Activated B cell treated with CpG ODN at 0.5 μM for 24 hours (primary cell): ENCODE measurements at regions of chr9 and their contacts with region 1.

Region 1: DNA sequence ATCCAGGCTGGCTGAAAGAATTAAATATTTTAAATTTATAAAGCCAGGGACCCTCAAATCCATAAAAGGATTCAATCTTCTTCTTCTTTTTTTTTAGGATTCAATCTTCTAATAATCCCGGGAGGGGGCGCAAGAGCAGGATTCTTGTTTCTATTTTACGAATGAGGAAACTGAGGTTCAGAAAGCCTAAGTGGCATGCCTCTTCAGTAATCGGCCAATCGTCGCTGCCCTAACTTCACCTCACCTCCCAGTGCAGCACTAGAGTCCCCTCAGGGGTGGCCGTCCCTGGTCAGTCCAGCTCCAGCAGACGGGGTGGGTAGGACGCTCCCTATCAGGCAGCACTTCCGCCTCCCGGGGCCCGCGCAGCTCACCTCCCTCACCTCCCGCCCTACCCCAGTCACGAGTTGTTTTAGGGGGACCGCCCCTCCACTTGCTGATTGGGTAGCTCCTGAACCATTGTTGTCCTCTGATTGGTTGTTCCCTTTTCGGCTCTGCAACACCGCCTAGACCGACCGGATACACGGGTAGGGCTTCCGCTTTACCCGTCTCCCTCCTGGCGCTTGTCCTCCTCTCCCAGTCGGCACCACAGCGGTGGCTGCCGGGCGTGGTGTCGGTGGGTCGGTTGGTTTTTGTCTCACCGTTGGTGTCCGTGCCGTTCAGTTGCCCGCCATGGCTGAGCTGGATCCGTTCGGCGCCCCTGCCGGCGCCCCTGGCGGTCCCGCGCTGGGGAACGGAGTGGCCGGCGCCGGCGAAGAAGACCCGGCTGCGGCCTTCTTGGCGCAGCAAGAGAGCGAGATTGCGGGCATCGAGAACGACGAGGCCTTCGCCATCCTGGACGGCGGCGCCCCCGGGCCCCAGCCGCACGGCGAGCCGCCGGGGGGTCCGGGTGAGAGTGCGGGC is at the start of gene CLTA:
- DNase-seq: peak; percentile 84
- ATAC-seq: peak; percentile 98
- H3K4me3 Mint-ChIP-seq: peak within 1 kb of the TSS; percentile 95
- H3K27ac Mint-ChIP-seq: peak within 1 kb of the TSS; percentile 91
- H3K4me1 Mint-ChIP-seq: peaks cover 51% of the 10 kb centered on the region
- H3K27me3 Mint-ChIP-seq: no peaks in the 10 kb centered on the region
- CTCF ChIP-seq: no peak
- total RNA-seq, gene CLTA: 104 and 115 TPM in 2 replicates

Region 2: GRCh38 chr9:36092509-36093215 is 98.0 kb before region 1 on chr9:
- CTCF ChIA-PET with region 1: no interaction called
- POLR2A ChIA-PET with region 1: interaction called, 6 read pairs
- intact Hi-C with region 1: loop called (anchors 1 kb)
- DNase-seq: no peak
- ATAC-seq: peak; percentile 98
- H3K4me3 Mint-ChIP-seq: peak overlapping the region; percentile 58
- H3K27ac Mint-ChIP-seq: peak overlapping the region; percentile 85
- H3K4me1 Mint-ChIP-seq: peaks cover 16% of the 10 kb centered on the region
- H3K27me3 Mint-ChIP-seq: no peaks in the 10 kb centered on the region
- CTCF ChIP-seq: no peak

Region 3: DNA sequence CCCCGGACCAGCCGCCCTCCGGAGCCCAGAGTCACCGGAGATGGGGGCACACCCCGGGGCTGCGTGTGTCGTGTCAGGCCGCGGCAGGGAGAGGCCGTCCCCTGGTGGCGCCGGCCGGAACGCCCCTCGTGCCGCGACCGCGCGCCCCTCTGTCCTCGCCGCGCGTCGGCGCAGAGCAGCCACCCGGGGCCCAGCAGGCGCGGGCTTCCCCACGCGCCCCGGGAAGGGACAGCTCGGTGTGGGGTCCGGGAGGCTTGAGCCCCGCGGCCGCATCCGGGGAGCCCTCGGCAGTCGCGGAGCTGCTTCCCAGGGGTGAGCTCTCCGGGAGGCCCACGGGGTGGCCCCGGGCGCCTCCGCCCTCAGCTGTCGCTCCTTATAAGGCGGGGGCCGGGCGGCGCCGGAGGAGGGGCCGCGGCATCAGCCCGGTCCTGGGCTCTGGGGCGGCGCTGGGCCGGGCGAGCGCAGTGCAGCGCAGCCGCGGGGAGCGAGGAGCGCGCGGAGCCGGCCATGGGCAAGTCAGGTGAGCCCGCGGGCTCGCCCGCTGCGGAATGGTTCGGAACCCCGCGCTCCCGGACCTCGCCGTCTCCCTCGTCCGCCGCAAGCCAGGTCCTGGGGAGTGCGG is 54.3 kb before region 1 on chr9 and contains the start of gene GLIPR2:
- CTCF ChIA-PET with region 1: no interaction called
- POLR2A ChIA-PET with region 1: interaction called, 9 read pairs
- intact Hi-C with region 1: loop called (anchors 1 kb)
- DNase-seq: peak; percentile 79
- ATAC-seq: peak; percentile 98
- H3K4me3 Mint-ChIP-seq: peak within 1 kb of the TSS; percentile 87
- H3K27ac Mint-ChIP-seq: peak within 1 kb of the TSS; percentile 88
- H3K4me1 Mint-ChIP-seq: peaks cover 53% of the 10 kb centered on the region
- H3K27me3 Mint-ChIP-seq: no peaks in the 10 kb centered on the region
- CTCF ChIP-seq: no peak
- total RNA-seq, gene GLIPR2: 13.6 and 14.3 TPM in 2 replicates

Region 4: GRCh38 chr9:36142510-36143244 is 48.0 kb before region 1 on chr9:
- CTCF ChIA-PET with region 1: interaction called, 8 read pairs
- POLR2A ChIA-PET with region 1: interaction called, 17 read pairs
- intact Hi-C with region 1: no loop called
- DNase-seq: no peak
- ATAC-seq: peak; percentile 52
- H3K4me3 Mint-ChIP-seq: peak overlapping the region; percentile 94
- H3K27ac Mint-ChIP-seq: peak overlapping the region; percentile 100
- H3K4me1 Mint-ChIP-seq: peaks cover 95% of the 10 kb centered on the region
- H3K27me3 Mint-ChIP-seq: no peaks in the 10 kb centered on the region
- CTCF ChIP-seq: no peak

Region 5: GRCh38 chr9:36148311-36149051 is 42.2 kb before region 1 on chr9:
- CTCF ChIA-PET with region 1: interaction called, 8 read pairs
- POLR2A ChIA-PET with region 1: interaction called, 17 read pairs
- intact Hi-C with region 1: loop called (anchors 1 kb)
- DNase-seq: no peak
- ATAC-seq: no peak
- H3K4me3 Mint-ChIP-seq: no peak overlapping the region
- H3K27ac Mint-ChIP-seq: no peak overlapping the region
- H3K4me1 Mint-ChIP-seq: peaks cover 81% of the 10 kb centered on the region
- H3K27me3 Mint-ChIP-seq: no peaks in the 10 kb centered on the region
- CTCF ChIP-seq: no peak

Region 6: DNA sequence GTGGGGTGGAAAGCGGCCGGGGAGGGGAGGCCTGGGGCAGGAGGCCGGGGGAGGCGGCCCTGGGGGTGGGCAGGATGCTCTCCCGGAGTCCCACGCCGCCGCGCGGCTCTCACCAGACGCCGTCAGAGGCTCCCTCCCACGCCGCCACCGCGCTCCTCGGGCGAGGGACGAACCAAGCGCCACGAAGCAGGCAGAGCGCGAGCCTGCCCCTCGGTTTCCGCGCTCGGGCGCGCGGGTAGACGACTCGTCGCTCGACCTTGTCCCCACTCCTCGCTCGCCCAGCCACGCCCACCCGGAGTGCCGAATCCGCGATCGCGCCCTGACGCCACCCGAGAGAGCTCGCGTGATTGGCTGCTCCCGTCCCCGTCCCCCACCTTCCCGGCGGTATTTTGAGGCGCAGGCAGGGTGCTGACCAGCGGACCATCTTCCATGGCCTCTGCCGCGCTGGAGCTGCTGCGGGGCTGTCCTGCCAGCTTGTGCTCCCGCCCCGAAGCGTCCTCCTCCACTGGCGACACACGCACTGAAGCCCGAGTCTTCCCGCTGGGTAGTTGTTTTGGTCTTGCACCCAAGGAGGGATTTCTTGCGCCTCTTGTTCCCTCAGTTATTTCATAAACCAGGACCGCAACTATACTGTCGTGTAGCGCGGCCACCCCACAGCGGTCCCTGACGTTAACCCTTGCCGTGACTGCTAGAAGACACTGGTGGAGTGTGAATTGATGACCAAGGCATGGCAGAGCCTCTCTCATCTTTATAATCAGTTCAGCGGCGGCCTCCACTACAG is 67.8 kb after region 1 on chr9 and contains the start of gene GNE:
- CTCF ChIA-PET with region 1: interaction called, 3 read pairs
- POLR2A ChIA-PET with region 1: interaction called, 18 read pairs
- intact Hi-C with region 1: loop called (anchors 1 kb)
- DNase-seq: peak; percentile 97
- ATAC-seq: peak; percentile 80
- H3K4me3 Mint-ChIP-seq: peak within 1 kb of the TSS; percentile 95
- H3K27ac Mint-ChIP-seq: peak within 1 kb of the TSS; percentile 92
- H3K4me1 Mint-ChIP-seq: peaks cover 16% of the 10 kb centered on the region
- H3K27me3 Mint-ChIP-seq: no peaks in the 10 kb centered on the region
- CTCF ChIP-seq: no peak
- total RNA-seq, gene GNE: 18.1 and 19.3 TPM in 2 replicates

Region 7: DNA sequence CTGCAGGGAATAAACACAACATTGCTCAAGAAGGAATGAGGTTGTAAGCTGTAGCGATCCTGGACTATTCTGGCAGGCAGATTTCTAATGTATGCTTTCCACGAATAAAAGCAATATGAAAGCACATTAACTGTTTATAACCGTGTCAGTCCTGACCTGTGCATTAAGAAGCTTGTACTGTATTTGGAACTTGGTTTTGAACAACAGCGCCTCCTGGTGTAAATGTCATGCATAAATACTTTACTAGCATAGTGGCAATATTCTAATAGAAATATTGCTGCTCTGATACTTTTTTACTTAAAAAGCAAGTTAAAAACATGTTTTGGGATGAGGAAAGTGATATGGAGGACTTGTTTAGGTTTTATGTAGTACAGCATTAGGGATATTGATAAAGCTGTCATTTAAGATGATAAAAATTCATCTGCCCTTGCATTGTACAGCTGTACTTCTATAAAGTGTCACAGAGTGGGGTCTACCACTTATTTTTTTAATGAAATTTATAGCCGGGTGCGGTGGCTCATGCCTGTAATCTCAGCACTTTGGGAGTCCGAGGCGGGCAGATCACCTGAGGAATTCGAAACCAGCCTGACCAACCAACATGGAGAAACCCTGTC is 138.3 kb after region 1 on chr9:
- CTCF ChIA-PET with region 1: interaction called, 18 read pairs
- POLR2A ChIA-PET with region 1: interaction called, 4 read pairs
- intact Hi-C with region 1: loop called (anchors 1 kb)
- DNase-seq: no peak
- ATAC-seq: peak; percentile 77
- H3K4me3 Mint-ChIP-seq: no peak overlapping the region
- H3K27ac Mint-ChIP-seq: no peak overlapping the region
- H3K4me1 Mint-ChIP-seq: peaks cover 2% of the 10 kb centered on the region
- H3K27me3 Mint-ChIP-seq: no peaks in the 10 kb centered on the region
- CTCF ChIP-seq: peak; percentile 65

Region 8: GRCh38 chr9:36357639-36358038 is 167.0 kb after region 1 on chr9:
- CTCF ChIA-PET with region 1: no interaction called
- POLR2A ChIA-PET with region 1: no interaction called
- intact Hi-C with region 1: no loop called
- DNase-seq: no peak
- ATAC-seq: no peak
- H3K4me3 Mint-ChIP-seq: no peak overlapping the region
- H3K27ac Mint-ChIP-seq: no peak overlapping the region
- H3K4me1 Mint-ChIP-seq: no peaks in the 10 kb centered on the region
- H3K27me3 Mint-ChIP-seq: no peaks in the 10 kb centered on the region
- CTCF ChIP-seq: no peak